Activated naive CD4-positive, alpha-beta T cell treated with anti-CD3 and anti-CD28 coated beads for 36 hours (primary cell): ENCODE measurements at regions of chr20 and their contacts with region 1.

Region 1: GRCh38 chr20:17968366-17969279 is at the starts of genes MGME1 and SNX5:
- DNase-seq: peak; percentile 99
- H3K4me3 Mint-ChIP-seq: peak within 1 kb of the TSS; percentile 86
- H3K27ac Mint-ChIP-seq: peak within 1 kb of the TSS; percentile 98
- H3K4me1 Mint-ChIP-seq: peaks cover 49% of the 10 kb centered on the region
- H3K27me3 Mint-ChIP-seq: no peaks in the 10 kb centered on the region
- total RNA-seq, gene MGME1: 28.7 to 30.6 TPM
- total RNA-seq, gene SNX5: 228 to 237 TPM

Region 2: GRCh38 chr20:16573001-16573965 is 1395.3 kb before region 1 on chr20 and contains the start of gene KIF16B:
- CTCF ChIA-PET with region 1: no interaction called
- intact Hi-C with region 1: loop called (anchors 2 kb)
- DNase-seq: peak; percentile 89
- H3K4me3 Mint-ChIP-seq: peak within 1 kb of the TSS; percentile 88
- H3K27ac Mint-ChIP-seq: peak within 1 kb of the TSS; percentile 79
- H3K4me1 Mint-ChIP-seq: peaks cover 35% of the 10 kb centered on the region
- H3K27me3 Mint-ChIP-seq: no peaks in the 10 kb centered on the region
- total RNA-seq, gene KIF16B: 5.1 to 5.6 TPM

Region 3: DNA sequence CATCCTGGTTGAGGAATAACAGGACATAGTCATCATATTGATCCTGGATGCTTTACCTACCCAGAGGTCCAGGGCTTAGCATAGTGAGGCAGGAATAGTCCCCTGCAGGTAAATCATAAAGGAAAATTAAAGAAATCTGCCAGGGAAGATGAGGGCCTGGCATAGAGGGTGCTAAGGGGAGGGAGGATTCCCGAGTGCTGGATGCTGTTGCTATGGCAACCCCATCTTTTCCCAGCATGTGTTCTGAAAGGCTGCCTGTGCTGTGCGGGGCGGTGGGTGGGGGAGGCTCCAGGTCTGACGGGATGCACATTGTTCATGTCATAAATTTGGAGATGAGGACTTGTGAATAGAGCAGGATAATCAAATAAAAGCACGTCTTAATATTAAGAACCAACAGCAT is 954.4 kb before region 1 on chr20:
- CTCF ChIA-PET with region 1: no interaction called
- intact Hi-C with region 1: no loop called
- DNase-seq: no peak
- H3K4me3 Mint-ChIP-seq: no peak overlapping the region
- H3K27ac Mint-ChIP-seq: no peak overlapping the region
- H3K4me1 Mint-ChIP-seq: no peaks in the 10 kb centered on the region
- H3K27me3 Mint-ChIP-seq: no peaks in the 10 kb centered on the region

Region 4: GRCh38 chr20:17569616-17570346 is 398.8 kb before region 1 on chr20 and contains the start of gene DSTN:
- CTCF ChIA-PET with region 1: no interaction called
- intact Hi-C with region 1: loop called (anchors 2 kb)
- DNase-seq: peak; percentile 84
- H3K4me3 Mint-ChIP-seq: peak within 1 kb of the TSS; percentile 91
- H3K27ac Mint-ChIP-seq: peak within 1 kb of the TSS; percentile 78
- H3K4me1 Mint-ChIP-seq: peaks cover 25% of the 10 kb centered on the region
- H3K27me3 Mint-ChIP-seq: no peaks in the 10 kb centered on the region
- total RNA-seq, gene DSTN: 68.9 to 69.7 TPM

Region 5: DNA sequence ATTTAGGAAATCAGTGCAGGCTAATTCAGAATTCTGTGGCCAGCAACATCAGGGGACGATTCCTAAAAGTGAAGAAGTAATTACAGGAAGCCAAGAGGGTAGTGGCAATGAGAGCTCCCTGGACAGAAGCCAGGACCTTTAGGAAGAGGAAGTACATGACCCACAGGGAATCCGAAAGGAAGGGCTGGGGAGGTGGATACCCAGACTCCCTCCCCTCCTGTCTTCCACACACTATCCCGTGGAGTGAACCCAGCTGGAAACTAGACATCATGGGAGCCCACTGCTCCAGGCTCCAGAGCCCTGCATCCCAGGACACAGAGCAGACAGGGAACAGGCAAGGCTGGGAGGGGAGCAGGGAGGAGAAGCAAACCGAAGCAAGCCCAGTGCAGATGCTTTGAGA is 83.1 kb before region 1 on chr20:
- CTCF ChIA-PET with region 1: no interaction called
- intact Hi-C with region 1: no loop called
- DNase-seq: no peak
- H3K4me3 Mint-ChIP-seq: no peak overlapping the region
- H3K27ac Mint-ChIP-seq: no peak overlapping the region
- H3K4me1 Mint-ChIP-seq: no peaks in the 10 kb centered on the region
- H3K27me3 Mint-ChIP-seq: peaks cover 7% of the 10 kb centered on the region

Region 6: GRCh38 chr20:17946572-17947473 is 21.8 kb before region 1 on chr20:
- CTCF ChIA-PET with region 1: no interaction called
- intact Hi-C with region 1: no loop called
- DNase-seq: no peak
- H3K4me3 Mint-ChIP-seq: no peak overlapping the region
- H3K27ac Mint-ChIP-seq: peak overlapping the region; percentile 41
- H3K4me1 Mint-ChIP-seq: no peaks in the 10 kb centered on the region
- H3K27me3 Mint-ChIP-seq: no peaks in the 10 kb centered on the region

Region 7: GRCh38 chr20:17958373-17959256 is 10.0 kb before region 1 on chr20:
- CTCF ChIA-PET with region 1: interaction called, 5 read pairs
- intact Hi-C with region 1: loop called (anchors 1 kb)
- DNase-seq: no peak
- H3K4me3 Mint-ChIP-seq: no peak overlapping the region
- H3K27ac Mint-ChIP-seq: peak overlapping the region; percentile 66
- H3K4me1 Mint-ChIP-seq: peaks cover 62% of the 10 kb centered on the region
- H3K27me3 Mint-ChIP-seq: no peaks in the 10 kb centered on the region

Region 8: DNA sequence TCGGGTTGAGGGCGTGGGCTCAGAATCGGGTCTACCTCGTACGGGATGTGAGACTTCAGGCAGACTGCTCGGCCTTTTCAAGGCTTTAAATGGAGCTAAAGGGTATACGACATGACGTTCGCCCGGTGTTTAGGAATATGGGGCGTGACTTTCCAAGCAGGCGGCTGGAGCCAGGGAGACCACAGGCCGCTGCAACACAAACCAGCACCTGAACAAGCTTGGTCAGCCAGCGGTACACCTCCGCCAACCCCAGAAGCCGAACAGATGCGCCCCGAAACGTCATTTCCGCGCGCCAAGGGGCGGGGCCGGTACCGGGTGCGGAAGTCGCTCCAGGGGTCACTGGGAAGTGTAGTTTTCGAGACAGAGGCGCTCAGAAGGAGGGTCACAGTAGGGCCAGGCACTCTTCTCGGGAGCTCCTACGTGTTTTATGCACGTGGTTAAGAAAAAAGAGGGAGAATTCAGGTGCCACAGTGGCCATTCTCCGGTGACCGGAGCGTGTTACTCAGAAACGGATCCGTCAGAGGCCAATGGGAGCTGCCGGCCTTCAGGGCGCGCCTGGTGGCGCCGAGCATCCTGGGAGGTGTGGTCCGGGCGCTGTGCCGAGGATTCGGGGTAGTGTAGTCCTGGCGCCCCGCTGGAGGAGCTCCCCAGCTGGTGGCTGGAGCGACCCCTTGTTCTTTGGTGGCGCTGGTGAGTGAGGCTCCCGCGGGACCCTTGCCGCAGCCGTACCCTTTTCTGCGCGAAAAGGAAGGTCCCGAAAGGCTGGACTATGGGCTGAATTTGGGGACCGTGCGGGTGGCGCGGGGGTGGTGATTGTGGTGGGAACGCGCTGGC is 319.5 kb after region 1 on chr20 and contains the start of gene ZNF133:
- CTCF ChIA-PET with region 1: no interaction called
- intact Hi-C with region 1: loop called (anchors 1 kb)
- DNase-seq: peak; percentile 97
- H3K4me3 Mint-ChIP-seq: peak within 1 kb of the TSS; percentile 95
- H3K27ac Mint-ChIP-seq: peak within 1 kb of the TSS; percentile 98
- H3K4me1 Mint-ChIP-seq: peaks cover 12% of the 10 kb centered on the region
- H3K27me3 Mint-ChIP-seq: peaks cover 12% of the 10 kb centered on the region
- total RNA-seq, gene ZNF133: 5.2 to 5.3 TPM

Region 9: DNA sequence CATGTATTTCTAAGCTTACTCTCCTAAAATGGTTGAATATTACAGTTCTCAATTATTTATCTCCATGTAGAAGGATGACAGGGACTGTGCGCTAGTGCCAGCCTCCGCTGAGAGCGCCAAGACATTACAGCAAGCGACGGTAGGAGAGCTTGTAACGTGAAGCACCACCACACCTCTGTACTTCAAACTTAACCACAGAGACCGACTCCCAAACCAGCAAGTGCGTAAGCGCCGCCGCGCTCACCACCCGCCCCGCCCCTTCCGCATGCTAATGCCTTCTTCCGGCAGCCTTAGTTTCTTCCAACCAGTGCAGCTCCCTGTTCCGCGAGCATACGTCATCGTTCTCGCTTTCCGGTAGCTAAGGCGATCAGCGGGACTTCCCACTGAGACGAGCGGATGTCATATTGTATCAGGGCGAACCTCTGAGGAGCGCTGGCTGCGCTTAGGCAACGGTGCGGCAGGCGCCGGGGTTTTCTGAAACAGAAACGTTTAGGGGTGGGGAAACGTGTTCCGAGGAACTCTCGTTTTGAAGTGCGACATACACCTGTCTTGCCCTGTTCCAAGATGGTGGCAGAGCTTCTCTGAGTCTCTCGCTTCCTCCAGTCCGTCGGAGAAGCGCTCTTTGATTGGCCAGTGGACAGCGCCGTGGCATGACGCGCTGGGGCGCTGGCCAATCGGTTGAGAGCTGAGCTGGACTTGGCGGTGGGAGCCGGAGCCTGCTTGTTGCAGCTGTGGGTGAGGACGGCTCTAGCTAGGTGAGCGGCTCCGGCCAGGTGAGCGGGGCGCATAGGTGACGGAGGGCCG is 538.8 kb after region 1 on chr20 and contains the start of gene SEC23B:
- CTCF ChIA-PET with region 1: no interaction called
- intact Hi-C with region 1: loop called (anchors 1 kb)
- DNase-seq: peak; percentile 99
- H3K4me3 Mint-ChIP-seq: peak within 1 kb of the TSS; percentile 100
- H3K27ac Mint-ChIP-seq: peak within 1 kb of the TSS; percentile 100
- H3K4me1 Mint-ChIP-seq: peaks cover 45% of the 10 kb centered on the region
- H3K27me3 Mint-ChIP-seq: no peaks in the 10 kb centered on the region
- total RNA-seq, gene SEC23B: 66.9 to 69.2 TPM

Region 10: GRCh38 chr20:19284400-19285178 is 1316.0 kb after region 1 on chr20:
- CTCF ChIA-PET with region 1: no interaction called
- intact Hi-C with region 1: no loop called
- DNase-seq: no peak
- H3K4me3 Mint-ChIP-seq: no peak overlapping the region
- H3K27ac Mint-ChIP-seq: no peak overlapping the region
- H3K4me1 Mint-ChIP-seq: no peaks in the 10 kb centered on the region
- H3K27me3 Mint-ChIP-seq: no peaks in the 10 kb centered on the region